MCF 10A (cell line): ENCODE measurements at regions of chr12 and their contacts with region 1.

Region 1: DNA sequence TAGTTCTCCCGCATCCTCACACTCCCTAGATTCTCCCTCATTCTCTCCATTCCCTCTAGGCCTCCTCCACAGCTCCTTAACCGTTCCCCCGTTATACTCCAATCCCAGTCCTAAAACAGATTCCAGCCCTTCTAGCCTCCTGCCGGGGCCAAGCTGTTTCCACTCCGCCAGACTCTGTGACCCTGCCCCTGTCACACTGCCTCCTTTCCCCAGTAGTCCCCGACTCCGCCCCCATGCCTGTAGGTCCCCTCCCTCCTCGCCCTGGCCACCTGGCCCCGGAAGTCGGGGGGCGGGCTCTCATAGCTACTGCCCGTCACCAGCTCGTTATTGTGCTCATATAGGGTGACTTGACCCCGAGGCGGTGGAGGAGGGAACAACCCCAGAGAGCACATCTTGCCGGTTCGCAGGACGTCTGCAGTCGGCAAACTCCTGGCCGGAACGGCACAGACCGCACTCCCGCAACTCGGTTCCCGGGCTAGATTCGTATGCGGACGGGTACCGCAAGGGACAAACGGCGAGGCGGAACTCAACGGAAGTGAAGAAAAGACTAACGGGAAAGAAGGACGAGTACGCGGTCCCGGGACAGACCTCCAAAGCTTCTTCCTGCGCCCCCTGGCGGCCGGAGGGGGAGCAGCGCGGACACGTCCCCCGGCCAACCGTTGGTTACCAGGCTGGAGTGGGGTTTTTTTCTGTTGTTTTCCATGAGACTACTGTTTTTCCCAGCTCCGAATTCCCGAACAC is at the start of gene AAAS:
- DNase-seq: peak; percentile 94
- H3K4me3 Mint-ChIP-seq: peak within 1 kb of the TSS; percentile 90
- H3K27ac Mint-ChIP-seq: peak within 1 kb of the TSS; percentile 93
- H3K4me1 Mint-ChIP-seq: peaks cover 23% of the 10 kb centered on the region
- H3K27me3 Mint-ChIP-seq: no peaks in the 10 kb centered on the region
- CTCF ChIP-seq: peak; percentile 90
- total RNA-seq, gene AAAS: 52.7 and 60.5 TPM in 2 replicates

Region 2: GRCh38 chr12:52976147-52977071 is 344.8 kb before region 1 on chr12:
- CTCF ChIA-PET with region 1: no interaction called
- POLR2A ChIA-PET with region 1: no interaction called
- intact Hi-C with region 1: no loop called
- DNase-seq: peak; percentile 82
- H3K4me3 Mint-ChIP-seq: no peak overlapping the region
- H3K27ac Mint-ChIP-seq: no peak overlapping the region
- H3K4me1 Mint-ChIP-seq: peaks cover 22% of the 10 kb centered on the region
- H3K27me3 Mint-ChIP-seq: no peaks in the 10 kb centered on the region
- CTCF ChIP-seq: peak; percentile 55

Region 3: GRCh38 chr12:53180220-53180930 is 140.9 kb before region 1 on chr12 and contains the starts of genes CSAD and ZNF740:
- CTCF ChIA-PET with region 1: no interaction called
- POLR2A ChIA-PET with region 1: interaction called, 14 read pairs
- intact Hi-C with region 1: no loop called
- DNase-seq: peak; percentile 96
- H3K4me3 Mint-ChIP-seq: peak within 1 kb of the TSS; percentile 95
- H3K27ac Mint-ChIP-seq: peak within 1 kb of the TSS; percentile 94
- H3K4me1 Mint-ChIP-seq: peaks cover 29% of the 10 kb centered on the region
- H3K27me3 Mint-ChIP-seq: no peaks in the 10 kb centered on the region
- CTCF ChIP-seq: no peak
- total RNA-seq, gene CSAD: 22.7 and 30.8 TPM in 2 replicates
- total RNA-seq, gene ZNF740: 34.9 and 36.2 TPM in 2 replicates

Region 4: GRCh38 chr12:53287741-53288216 is 33.5 kb before region 1 on chr12:
- CTCF ChIA-PET with region 1: interaction called, 12 read pairs
- POLR2A ChIA-PET with region 1: no interaction called
- intact Hi-C with region 1: no loop called
- DNase-seq: peak; percentile 61
- H3K4me3 Mint-ChIP-seq: no peak overlapping the region
- H3K27ac Mint-ChIP-seq: peak overlapping the region; percentile 24
- H3K4me1 Mint-ChIP-seq: peaks cover 6% of the 10 kb centered on the region
- H3K27me3 Mint-ChIP-seq: no peaks in the 10 kb centered on the region
- CTCF ChIP-seq: peak; percentile 74

Region 5: DNA sequence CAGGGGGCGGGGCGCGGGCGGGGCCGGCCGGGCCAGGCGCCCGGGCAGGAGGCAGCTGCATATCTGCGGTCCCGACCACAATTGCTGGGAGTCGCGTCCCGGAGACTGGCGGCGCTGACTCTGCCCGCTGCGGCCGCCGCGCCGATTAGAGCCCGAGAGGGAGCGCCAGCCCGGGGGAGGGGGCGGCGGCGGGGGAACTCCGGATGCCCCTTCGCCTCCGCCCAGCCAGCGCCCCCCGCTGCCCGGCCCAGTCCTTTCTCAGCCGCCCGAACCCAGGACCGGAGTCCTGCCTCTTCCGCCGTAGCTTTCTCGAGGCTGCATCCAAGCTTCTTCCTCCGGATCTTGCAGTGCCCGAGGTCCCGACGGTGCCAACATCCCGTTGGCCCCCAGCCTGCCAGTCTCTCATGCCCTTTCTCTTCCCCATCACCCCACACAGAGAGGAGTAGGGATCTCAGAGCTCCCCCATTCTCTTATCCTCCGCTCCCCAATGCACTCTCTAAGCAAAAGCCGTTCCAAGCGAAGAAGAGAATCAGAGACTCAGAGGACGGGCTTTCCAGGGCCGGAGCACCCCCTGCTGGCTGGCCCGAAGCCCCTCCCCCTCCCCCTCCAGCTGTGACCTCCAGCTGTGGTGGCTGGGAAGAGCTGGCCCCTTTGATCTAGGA is 23.7 kb after region 1 on chr12:
- CTCF ChIA-PET with region 1: interaction called, 92 read pairs
- POLR2A ChIA-PET with region 1: interaction called, 14 read pairs
- intact Hi-C with region 1: loop called (anchors 1 kb)
- DNase-seq: peak; percentile 72
- H3K4me3 Mint-ChIP-seq: peak overlapping the region; percentile 75
- H3K27ac Mint-ChIP-seq: no peak overlapping the region
- H3K4me1 Mint-ChIP-seq: peaks cover 7% of the 10 kb centered on the region
- H3K27me3 Mint-ChIP-seq: peaks cover 13% of the 10 kb centered on the region
- CTCF ChIP-seq: peak; percentile 62

Region 6: GRCh38 chr12:53427905-53428594 is 106.8 kb after region 1 on chr12:
- CTCF ChIA-PET with region 1: interaction called, 52 read pairs
- POLR2A ChIA-PET with region 1: interaction called, 5 read pairs
- intact Hi-C with region 1: no loop called
- DNase-seq: peak; percentile 95
- H3K4me3 Mint-ChIP-seq: no peak overlapping the region
- H3K27ac Mint-ChIP-seq: peak overlapping the region; percentile 0
- H3K4me1 Mint-ChIP-seq: peaks cover 21% of the 10 kb centered on the region
- H3K27me3 Mint-ChIP-seq: no peaks in the 10 kb centered on the region
- CTCF ChIP-seq: no peak

Region 7: DNA sequence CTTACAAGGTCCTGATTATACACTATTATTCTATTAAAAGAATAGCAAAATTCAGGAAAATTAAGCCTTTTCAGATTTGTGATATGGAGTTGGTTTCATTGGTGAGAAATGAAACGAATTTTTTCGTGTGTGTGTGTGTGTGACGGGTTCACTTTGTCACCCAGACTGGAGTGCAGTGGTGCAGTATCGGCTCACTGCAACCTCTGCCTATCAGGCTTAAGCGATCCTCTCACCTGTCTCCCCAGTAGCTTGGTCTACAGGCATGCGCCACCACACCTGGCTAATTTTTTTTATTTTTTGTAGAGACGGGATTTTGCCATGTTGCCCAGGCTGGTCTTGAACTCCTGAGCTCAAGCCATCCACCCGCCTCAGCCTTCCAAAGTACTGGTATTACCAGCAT is 140.3 kb after region 1 on chr12:
- CTCF ChIA-PET with region 1: no interaction called
- POLR2A ChIA-PET with region 1: no interaction called
- intact Hi-C with region 1: no loop called
- DNase-seq: no peak
- H3K4me3 Mint-ChIP-seq: no peak overlapping the region
- H3K27ac Mint-ChIP-seq: no peak overlapping the region
- H3K4me1 Mint-ChIP-seq: peaks cover 34% of the 10 kb centered on the region
- H3K27me3 Mint-ChIP-seq: no peaks in the 10 kb centered on the region
- CTCF ChIP-seq: no peak

Region 8: GRCh38 chr12:53492830-53493611 is 171.8 kb after region 1 on chr12:
- CTCF ChIA-PET with region 1: interaction called, 7 read pairs
- POLR2A ChIA-PET with region 1: interaction called, 10 read pairs
- intact Hi-C with region 1: no loop called
- DNase-seq: peak; percentile 84
- H3K4me3 Mint-ChIP-seq: peak overlapping the region; percentile 76
- H3K27ac Mint-ChIP-seq: peak overlapping the region; percentile 32
- H3K4me1 Mint-ChIP-seq: peaks cover 29% of the 10 kb centered on the region
- H3K27me3 Mint-ChIP-seq: no peaks in the 10 kb centered on the region
- CTCF ChIP-seq: no peak

Region 9: GRCh38 chr12:53675651-53676453 is 354.6 kb after region 1 on chr12 and contains the start of gene ATP5MC2:
- CTCF ChIA-PET with region 1: no interaction called
- POLR2A ChIA-PET with region 1: interaction called, 3 read pairs
- intact Hi-C with region 1: loop called (anchors 10 kb)
- DNase-seq: peak; percentile 98
- H3K4me3 Mint-ChIP-seq: peak within 1 kb of the TSS; percentile 83
- H3K27ac Mint-ChIP-seq: peak within 1 kb of the TSS; percentile 80
- H3K4me1 Mint-ChIP-seq: peaks cover 10% of the 10 kb centered on the region
- H3K27me3 Mint-ChIP-seq: peaks cover 12% of the 10 kb centered on the region
- CTCF ChIP-seq: peak; percentile 97
- total RNA-seq, gene ATP5MC2: 328 and 381 TPM in 2 replicates